Adrenal gland (tissue), 19 donors: ENCODE measurements at regions of chr17 and their contacts with region 1.

Region 1: GRCh38 chr17:32859857-32860525 is 16.9 kb downstream of the MYO1D start:
- DNase-seq: no peak
- H3K4me3 ChIP-seq: no peak overlapping the region
- H3K27ac ChIP-seq: no peak overlapping the region
- H3K4me1 ChIP-seq: peaks cover 10 to 20% of the 10 kb centered on the region in 2 donors
- H3K27me3 ChIP-seq: no peaks in the 10 kb centered on the region
- CTCF ChIP-seq: no peak
- POLR2A ChIP-seq: no peak

Region 2: DNA sequence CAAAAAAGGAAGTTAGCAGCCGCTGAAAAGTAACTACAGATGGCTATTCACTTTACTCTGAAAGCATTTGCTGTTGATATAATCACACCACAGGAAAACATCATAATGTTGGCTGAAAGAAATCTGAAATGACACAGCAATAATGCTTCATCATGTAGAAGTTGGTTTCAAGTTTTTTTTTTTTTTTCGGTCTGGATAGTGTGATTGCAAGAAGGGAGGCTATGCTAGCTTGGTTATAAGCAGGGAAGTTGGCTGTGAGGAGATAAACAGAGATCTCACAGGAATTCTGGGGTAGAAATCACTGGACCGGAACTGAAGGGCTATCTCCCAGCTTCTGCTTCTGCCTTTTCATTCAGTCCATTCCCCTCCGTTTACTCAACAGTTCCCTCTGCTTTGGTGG is 41.0 kb before region 1 on chr17:
- intact Hi-C with region 1: loop called in 1 of 2 experiments (anchors 10 kb)
- DNase-seq: no peak
- H3K4me3 ChIP-seq: no peak overlapping the region
- H3K27ac ChIP-seq: peak overlapping the region in 2 of 5 donors; percentile 26 to 32
- H3K4me1 ChIP-seq: peaks cover 4 to 8% of the 10 kb centered on the region in 2 donors
- H3K27me3 ChIP-seq: no peaks in the 10 kb centered on the region
- CTCF ChIP-seq: no peak
- POLR2A ChIP-seq: no peak